RWPE1 (cell line): ENCODE measurements at regions of chr15 and their contacts with region 1.

Region 1: DNA sequence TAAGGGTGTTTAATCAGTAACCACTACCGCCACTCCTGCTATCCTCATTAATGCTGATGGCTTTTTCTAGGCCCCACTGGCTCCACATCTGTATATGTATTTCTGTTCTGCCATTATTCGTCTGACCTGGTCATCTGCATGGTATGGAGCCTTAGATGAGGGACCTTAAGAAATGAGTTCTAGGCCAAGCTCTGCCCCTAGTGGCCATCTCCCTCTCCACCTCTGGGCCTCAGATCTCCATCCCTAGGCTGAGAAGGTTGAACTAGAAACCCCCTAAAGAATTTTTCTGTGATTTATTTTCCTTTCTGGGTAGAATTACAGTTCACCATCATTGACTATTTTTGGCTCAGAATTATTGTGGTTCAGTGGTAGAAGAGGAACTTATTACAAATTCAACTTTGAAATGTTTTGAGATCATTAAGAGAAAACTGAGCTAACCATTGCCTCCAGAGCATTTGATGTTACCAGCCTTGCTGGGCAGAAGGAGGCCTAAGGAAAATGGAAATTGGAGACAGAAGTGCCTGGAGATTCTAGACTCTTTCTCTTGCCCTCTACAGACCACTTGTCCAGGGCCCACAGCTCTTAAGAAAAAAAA is 325.2 kb upstream of the NR2E3 start:
- DNase-seq: no peak
- H3K27ac ChIP-seq: no peak overlapping the region
- CTCF ChIP-seq: peak; percentile 38; the same call in 1 of the 2 replicates

Region 2: GRCh38 chr15:71066983-71067382 is 418.2 kb before region 1 on chr15:
- CTCF ChIA-PET with region 1: interaction called, 10 read pairs
- POLR2A ChIA-PET with region 1: no interaction called
- DNase-seq: no peak
- H3K27ac ChIP-seq: no peak overlapping the region
- CTCF ChIP-seq: no peak

Region 3: GRCh38 chr15:71237456-71238188 is 247.6 kb before region 1 on chr15:
- CTCF ChIA-PET with region 1: no interaction called
- POLR2A ChIA-PET with region 1: no interaction called
- DNase-seq: peak; percentile 98
- H3K27ac ChIP-seq: peak overlapping the region; percentile 68
- CTCF ChIP-seq: no peak